ENCODE measurements at regions of chr4 and their contacts with region 1.

Region 1: GRCh38 chr4:126264839-126265238 is 950.1 kb downstream of the FAT4 start:
- DNase-seq: no peak
- ATAC-seq: no peak
- H3K4me3 ChIP-seq: no peak overlapping the region
- H3K27ac ChIP-seq: no peak overlapping the region
- H3K4me1 ChIP-seq: no peaks in the 10 kb centered on the region
- H3K27me3 ChIP-seq: no peaks in the 10 kb centered on the region
- CTCF ChIP-seq: no peak
- POLR2A ChIP-seq: no peak

Region 2: DNA sequence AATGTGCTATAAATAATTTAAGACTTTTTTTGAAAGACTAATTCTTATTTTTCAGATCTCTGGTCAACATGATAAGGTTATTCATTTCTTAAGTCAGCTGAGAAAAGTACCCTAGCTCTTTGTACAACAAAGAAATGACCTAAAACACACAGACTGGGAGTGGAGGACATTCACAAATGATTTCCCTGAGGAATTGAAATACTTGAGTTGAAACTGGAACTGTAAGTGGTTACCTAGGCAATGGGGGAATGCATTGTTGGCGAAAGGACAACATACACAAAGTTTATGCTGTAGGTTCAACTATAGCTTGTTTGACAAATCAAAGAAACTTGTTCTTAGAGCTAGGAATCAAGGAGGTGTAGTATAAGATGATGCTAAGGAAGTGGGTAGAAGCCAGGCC is 34.6 kb before region 1 on chr4:
- in situ Hi-C with region 1: no loop called
- intact Hi-C with region 1: no loop called
- DNase-seq: no peak
- ATAC-seq: no peak
- H3K4me3 ChIP-seq: no peak overlapping the region
- H3K27ac ChIP-seq: no peak overlapping the region
- H3K4me1 ChIP-seq: no peaks in the 10 kb centered on the region
- H3K27me3 ChIP-seq: no peaks in the 10 kb centered on the region
- CTCF ChIP-seq: no peak
- POLR2A ChIP-seq: no peak

Region 3: GRCh38 chr4:126364311-126364911 is 99.6 kb after region 1 on chr4:
- in situ Hi-C with region 1: loop called in 1 of 4 experiments (anchors 25 kb)
- intact Hi-C with region 1: no loop called
- DNase-seq: no peak
- ATAC-seq: peak; percentile 33 to 60
- H3K4me3 ChIP-seq: no peak overlapping the region
- H3K27ac ChIP-seq: no peak overlapping the region
- H3K4me1 ChIP-seq: no peaks in the 10 kb centered on the region
- H3K27me3 ChIP-seq: no peaks in the 10 kb centered on the region
- CTCF ChIP-seq: no peak
- POLR2A ChIP-seq: no peak